Heart right ventricle (tissue), 16 donors: ENCODE measurements at regions of chr5 and their contacts with region 1.

Region 1: GRCh38 chr5:38922199-38922598 is 76.4 kb downstream of the OSMR start:
- DNase-seq: peak; percentile 33 to 41
- ATAC-seq: peak in 7 of 8 donors; percentile 28 to 77 (median 72)
- H3K4me3 ChIP-seq: no peak overlapping the region
- H3K27ac ChIP-seq: no peak overlapping the region
- H3K4me1 ChIP-seq: peaks cover 0 to 23% (median 9%) of the 10 kb centered on the region in 9 donors
- H3K27me3 ChIP-seq: no peaks in the 10 kb centered on the region
- CTCF ChIP-seq: peak; percentile 47 to 82 (median 69)

Region 2: DNA sequence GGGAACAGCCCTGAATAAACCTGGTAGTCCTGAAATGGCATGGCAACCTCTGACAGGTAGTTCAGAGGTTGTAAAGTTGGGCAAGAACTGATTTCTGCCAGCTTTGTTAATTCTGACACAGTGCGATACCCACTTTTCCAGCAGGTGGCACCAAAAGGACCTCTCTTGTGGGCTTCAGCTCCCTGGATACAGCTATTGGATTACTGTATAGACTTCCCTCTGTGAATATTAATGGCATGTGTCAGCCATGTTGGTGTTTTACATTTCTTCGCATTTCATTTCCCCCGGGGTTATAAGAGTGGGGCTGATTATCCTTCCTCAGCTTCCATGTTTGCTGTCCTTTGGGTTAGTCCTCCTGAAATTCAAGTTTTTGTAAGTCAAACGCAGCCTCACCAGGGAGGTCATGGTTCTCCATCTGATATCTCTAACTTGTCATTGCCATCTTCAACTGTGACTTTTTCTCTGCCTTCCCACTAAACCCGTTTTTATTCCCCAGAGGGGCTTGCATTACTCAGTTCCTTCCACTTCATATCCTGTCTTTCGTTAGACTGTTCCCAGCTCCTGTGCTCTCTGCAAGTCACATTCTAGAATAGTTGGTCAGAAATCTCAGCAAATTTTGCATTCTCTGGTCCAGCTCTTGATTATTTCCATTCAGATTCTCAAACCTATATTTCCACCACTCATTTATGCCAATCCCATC is 501.4 kb before region 1 on chr5:
- intact Hi-C with region 1: loop called in 1 of 10 experiments (anchors 10 kb)
- DNase-seq: peak; percentile 27 to 53
- ATAC-seq: peak in 6 of 8 donors; percentile 45 to 77 (median 74)
- H3K4me3 ChIP-seq: no peak overlapping the region
- H3K27ac ChIP-seq: no peak overlapping the region
- H3K4me1 ChIP-seq: peaks cover 0 to 13% (median 0%) of the 10 kb centered on the region in 9 donors
- H3K27me3 ChIP-seq: peaks cover 0 to 7% (median 0%) of the 10 kb centered on the region in 7 donors
- CTCF ChIP-seq: peak; percentile 38 to 82 (median 74)

Region 3: GRCh38 chr5:38441453-38442246 is 480.5 kb before region 1 on chr5:
- intact Hi-C with region 1: loop called in 3 of 10 experiments (anchors 10 kb)
- DNase-seq: peak; percentile 75 to 91
- ATAC-seq: peak; percentile 91 to 98 (median 95)
- H3K4me3 ChIP-seq: no peak overlapping the region
- H3K27ac ChIP-seq: no peak overlapping the region
- H3K4me1 ChIP-seq: peaks cover 0 to 18% (median 5%) of the 10 kb centered on the region in 9 donors
- H3K27me3 ChIP-seq: peaks cover 0 to 73% (median 0%) of the 10 kb centered on the region in 7 donors
- CTCF ChIP-seq: peak; percentile 90 to 98 (median 97)

Region 4: DNA sequence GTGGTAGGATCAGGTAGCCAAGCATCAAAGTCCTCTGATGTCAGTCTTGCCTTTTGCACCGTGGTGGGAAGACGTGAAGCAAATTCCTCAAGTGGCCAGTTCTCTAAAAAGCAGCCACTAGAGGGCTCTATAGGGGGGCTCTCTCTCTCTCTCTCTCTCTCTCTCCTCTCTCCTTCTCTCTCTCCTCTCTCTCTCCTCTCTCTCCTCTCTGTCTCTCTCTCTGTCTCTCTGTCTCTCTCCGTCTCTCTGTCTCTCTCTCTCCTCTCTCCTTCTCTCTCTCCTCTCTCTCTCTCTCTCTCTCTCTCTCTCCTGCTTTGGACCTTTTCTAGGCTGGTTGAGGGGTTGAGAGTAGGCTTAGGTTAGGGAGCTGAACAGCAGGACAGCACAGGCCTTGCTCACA is 90.3 kb before region 1 on chr5:
- intact Hi-C with region 1: loop called in 8 of 10 experiments (anchors 5 to 10 kb)
- DNase-seq: no peak
- ATAC-seq: peak in 5 of 8 donors; percentile 12 to 53 (median 39)
- H3K4me3 ChIP-seq: no peak overlapping the region
- H3K27ac ChIP-seq: no peak overlapping the region
- H3K4me1 ChIP-seq: peaks cover 2 to 24% (median 12%) of the 10 kb centered on the region in 9 donors
- H3K27me3 ChIP-seq: no peaks in the 10 kb centered on the region
- CTCF ChIP-seq: peak in 8 of 9 donors; percentile 9 to 57 (median 44)

Region 5: DNA sequence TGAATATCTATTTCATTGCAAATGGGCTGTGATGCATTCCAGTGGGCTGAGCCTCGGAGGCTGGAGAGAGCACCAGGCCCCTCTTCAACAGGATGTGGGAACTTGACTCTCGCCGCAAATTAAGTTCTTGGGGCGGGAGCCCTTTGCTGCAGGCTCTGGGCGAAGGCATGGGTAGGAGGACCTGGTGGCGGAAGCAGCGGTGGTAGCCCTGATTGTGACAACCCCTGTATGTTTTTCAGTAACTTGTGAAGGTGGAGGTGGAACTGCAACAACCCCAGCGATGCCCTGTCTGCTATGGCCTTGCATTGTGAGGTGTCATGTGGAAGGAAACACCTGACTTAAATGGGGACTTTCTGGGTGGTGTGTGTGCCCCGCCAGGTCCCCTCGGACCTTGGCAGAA is 287.7 kb after region 1 on chr5:
- intact Hi-C with region 1: no loop called
- DNase-seq: peak in 1 of 2 donors; percentile 19
- ATAC-seq: peak in 1 of 8 donors; percentile 25
- H3K4me3 ChIP-seq: no peak overlapping the region
- H3K27ac ChIP-seq: peak overlapping the region in 1 of 10 donors; percentile 78
- H3K4me1 ChIP-seq: peaks cover 0 to 98% (median 0%) of the 10 kb centered on the region in 9 donors
- H3K27me3 ChIP-seq: peaks cover 0 to 5% (median 0%) of the 10 kb centered on the region in 7 donors
- CTCF ChIP-seq: no peak